Breast epithelium (tissue), 4 donors: ENCODE measurements at regions of chr2 and their contacts with region 1.

Region 1: GRCh38 chr2:192194866-192195547 is at the start of gene TMEFF2:
- DNase-seq: peak; percentile 22 to 51
- H3K4me3 ChIP-seq: peak within 1 kb of the TSS; percentile 39 to 64 (median 46)
- H3K27ac ChIP-seq: no peak within 1 kb of the TSS
- H3K4me1 ChIP-seq: peaks cover 13 to 18% of the 10 kb centered on the region in 2 donors
- H3K27me3 ChIP-seq: peaks cover 0 to 74% of the 10 kb centered on the region in 2 donors
- CTCF ChIP-seq: no peak
- POLR2A ChIP-seq: no peak
- total RNA-seq, gene TMEFF2: 0.32 TPM in 1 of 3 donors, not detected in the others

Region 2: GRCh38 chr2:192354512-192355244 is 159.7 kb after region 1 on chr2:
- intact Hi-C with region 1: loop called (anchors 5 kb)
- DNase-seq: no peak
- H3K4me3 ChIP-seq: no peak overlapping the region
- H3K27ac ChIP-seq: no peak overlapping the region
- H3K4me1 ChIP-seq: no peaks in the 10 kb centered on the region
- H3K27me3 ChIP-seq: no peaks in the 10 kb centered on the region
- CTCF ChIP-seq: no peak
- POLR2A ChIP-seq: no peak